HEK293 (cell line): ENCODE measurements at regions of chr14 and their contacts with region 1.

Region 1: DNA sequence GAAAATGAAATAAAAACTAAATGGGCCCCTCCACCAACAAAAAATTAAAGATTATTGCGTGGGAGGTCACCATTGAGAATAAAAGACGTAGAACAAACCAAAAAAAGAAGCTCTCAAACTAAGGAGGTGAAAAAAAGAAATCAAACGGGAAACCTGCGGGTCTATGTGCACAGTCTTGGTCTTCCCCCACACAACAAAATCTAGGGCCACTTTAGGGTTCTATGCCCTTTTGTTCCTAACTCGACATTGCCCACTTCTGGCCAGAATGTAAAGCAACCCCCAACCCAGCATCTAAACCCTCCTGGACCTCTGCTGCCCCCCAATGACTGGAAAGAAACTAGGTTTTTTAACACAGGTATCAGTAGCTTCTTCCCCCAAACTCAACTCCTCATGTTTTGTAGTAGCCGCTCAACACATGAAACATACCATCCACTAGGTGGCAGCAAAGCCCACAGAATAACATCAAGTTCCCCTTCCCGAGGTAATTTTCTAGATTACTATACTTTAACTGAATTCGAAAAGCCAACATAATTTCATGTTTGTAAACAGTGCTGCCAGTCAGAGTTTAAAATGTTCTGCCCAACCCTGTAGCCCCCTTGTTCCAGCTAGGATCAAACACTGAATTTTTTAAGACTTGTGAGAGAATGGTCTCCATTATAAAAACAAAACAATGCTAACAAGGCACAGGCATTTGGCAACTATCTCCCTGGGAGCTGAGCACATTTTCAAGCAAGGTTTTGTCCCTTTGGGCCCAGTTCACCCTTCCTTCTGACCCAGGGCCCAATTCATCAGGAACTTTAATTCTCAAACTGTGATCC is 18.7 kb downstream of the DAD1 start:
- H3K4me3 ChIP-seq: no peak overlapping the region
- H3K27ac ChIP-seq: no peak overlapping the region
- H3K4me1 ChIP-seq: peaks cover 2% of the 10 kb centered on the region; the same call in 1 of the 2 replicates
- CTCF ChIP-seq: peak; percentile 83

Region 2: DNA sequence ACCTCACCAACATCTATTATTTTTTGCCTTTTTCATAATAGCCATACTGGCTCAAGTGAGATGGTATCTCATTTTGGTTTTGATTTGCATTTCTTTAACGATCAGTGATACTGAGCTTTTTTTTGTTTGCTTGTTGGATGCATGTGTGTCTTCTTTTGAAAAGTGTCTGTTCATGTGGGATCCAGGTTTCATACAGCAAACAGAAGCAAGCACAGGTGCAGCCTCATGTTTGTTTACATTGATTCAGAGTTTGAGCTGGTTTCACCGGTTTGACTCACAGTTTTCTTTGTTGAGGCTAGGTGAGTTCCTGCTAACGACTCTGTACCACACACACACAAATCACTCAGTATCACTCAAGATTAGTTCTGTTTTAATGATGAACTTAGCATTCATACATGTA is 939.3 kb before region 1 on chr14:
- CTCF ChIA-PET with region 1: no interaction called
- POLR2A ChIA-PET with region 1: no interaction called
- H3K4me3 ChIP-seq: no peak overlapping the region
- H3K27ac ChIP-seq: no peak overlapping the region
- H3K4me1 ChIP-seq: no peaks in the 10 kb centered on the region
- CTCF ChIP-seq: no peak

Region 3: DNA sequence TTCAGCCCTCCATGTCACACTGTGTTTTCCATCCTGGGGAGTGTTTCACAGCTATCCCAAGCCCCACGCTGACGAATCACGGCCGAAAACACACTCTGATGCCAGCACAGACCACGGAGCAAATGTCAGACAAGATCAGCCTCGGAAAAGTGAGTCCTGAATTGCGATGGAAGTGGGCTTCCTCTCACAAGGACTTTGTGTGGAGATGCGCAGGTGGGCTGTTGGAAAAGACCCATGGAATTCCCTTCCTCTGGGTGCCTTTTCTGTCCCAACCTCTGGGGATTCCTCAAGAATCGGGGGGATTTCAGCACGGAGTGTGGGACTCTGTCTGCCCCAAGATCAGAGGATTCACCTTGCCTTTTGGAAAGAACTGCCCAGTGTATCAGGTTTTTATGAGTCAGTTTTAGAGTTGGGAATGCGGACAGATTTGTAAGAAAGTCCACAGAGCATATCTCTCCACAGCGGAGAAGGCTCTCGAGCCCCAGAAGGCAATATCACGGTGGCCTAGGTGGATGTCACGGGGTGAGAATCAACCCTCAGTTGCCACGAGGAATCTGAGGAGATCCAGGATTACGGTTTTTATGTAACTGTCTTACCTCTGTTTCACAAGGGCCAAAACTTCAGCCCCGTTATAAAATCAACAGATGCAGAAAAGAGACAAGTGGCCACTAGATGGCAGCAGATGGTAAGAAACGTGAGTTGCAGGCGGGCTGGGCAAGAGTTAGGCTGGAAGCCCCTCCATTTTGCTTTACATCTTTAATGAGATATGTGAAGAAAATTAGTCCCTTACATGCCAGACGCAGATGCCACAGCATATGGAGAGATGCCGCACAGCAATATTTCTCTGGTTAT is 183.2 kb before region 1 on chr14:
- CTCF ChIA-PET with region 1: interaction called, 12 read pairs
- POLR2A ChIA-PET with region 1: no interaction called
- H3K4me3 ChIP-seq: no peak overlapping the region
- H3K27ac ChIP-seq: no peak overlapping the region
- H3K4me1 ChIP-seq: no peaks in the 10 kb centered on the region
- CTCF ChIP-seq: peak; percentile 69

Region 4: DNA sequence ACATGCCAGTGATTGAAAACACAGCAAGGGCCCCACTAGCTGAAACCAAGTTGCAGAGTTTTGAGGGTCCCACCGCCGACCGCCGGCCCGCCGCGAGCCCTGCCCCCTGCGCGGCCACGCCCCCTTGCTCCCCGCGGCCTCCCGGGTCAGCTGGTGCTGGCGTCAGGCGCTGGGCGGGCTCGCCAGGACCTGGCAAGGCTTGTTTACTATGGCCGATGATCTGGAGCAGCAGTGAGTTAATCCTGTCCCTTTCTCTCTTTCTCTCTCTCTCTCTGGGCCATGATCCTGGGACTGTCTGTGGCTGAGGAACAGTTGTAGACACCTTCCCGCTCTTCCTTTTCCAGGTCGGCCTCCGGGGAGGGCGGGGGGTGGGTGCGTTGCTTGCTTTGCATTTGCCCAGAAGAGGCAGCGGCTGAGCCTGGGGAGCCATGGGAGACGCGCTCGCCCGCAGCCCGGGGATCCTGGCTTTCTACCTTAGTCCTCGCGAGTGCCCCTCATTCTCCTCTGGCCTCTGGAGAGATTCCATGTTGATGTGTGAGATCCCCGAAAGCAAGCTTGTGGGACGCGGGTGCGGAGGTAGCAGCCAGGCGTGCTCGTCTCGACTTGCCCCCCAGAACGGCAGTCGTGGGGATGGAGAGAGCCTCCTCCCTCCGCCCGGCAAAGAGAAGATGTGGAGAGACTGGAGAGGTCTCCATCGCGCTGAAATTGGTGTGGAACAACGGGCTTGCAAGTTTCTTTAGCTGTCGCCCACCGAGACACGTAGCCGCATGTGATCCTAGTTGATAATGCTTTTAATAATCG is 28.0 kb after region 1 on chr14 and contains the start of gene ABHD4:
- CTCF ChIA-PET with region 1: interaction called, 10 read pairs
- POLR2A ChIA-PET with region 1: no interaction called
- H3K4me3 ChIP-seq: peak within 1 kb of the TSS; percentile 86
- H3K27ac ChIP-seq: peak within 1 kb of the TSS; percentile 49; the same call in 1 of the 2 replicates
- H3K4me1 ChIP-seq: 0 out of 2 replicates have a peak, but pooled peaks cover 2% of the 10 kb centered on the region
- CTCF ChIP-seq: no peak; the same call in 1 of the 2 replicates

Region 5: DNA sequence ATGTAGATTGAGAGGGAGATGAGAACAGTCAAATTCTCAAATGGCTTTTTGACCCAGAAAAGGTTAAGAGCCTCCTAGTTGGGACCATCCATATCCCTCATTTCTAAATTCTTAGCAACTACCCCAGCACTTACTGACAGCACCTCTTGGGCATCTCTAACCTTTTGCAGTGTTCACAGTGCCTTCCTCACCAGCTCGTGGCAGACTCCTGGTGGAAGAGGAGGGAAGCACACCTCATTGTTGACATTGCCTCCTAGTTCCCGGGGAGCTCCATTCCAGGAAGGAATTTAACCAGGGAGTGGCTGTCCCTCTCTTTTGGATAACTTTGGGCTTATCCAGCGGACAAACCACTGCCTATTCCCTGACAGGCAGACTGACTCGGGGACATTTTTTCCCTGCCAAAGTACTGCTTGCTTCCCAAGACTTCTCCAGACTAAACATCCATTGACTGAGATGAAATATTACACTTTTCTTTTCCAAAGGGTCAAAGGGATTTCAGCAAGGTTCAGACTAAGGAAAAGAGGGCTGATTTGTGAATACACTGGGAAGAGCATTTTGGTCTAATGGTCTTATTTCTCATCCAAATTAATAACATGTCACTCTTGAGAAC is 82.8 kb after region 1 on chr14:
- CTCF ChIA-PET with region 1: interaction called, 91 read pairs
- POLR2A ChIA-PET with region 1: no interaction called
- H3K4me3 ChIP-seq: no peak overlapping the region
- H3K27ac ChIP-seq: no peak overlapping the region
- H3K4me1 ChIP-seq: peaks cover 5% of the 10 kb centered on the region; the same call in 1 of the 2 replicates
- CTCF ChIP-seq: peak; percentile 58

Region 6: DNA sequence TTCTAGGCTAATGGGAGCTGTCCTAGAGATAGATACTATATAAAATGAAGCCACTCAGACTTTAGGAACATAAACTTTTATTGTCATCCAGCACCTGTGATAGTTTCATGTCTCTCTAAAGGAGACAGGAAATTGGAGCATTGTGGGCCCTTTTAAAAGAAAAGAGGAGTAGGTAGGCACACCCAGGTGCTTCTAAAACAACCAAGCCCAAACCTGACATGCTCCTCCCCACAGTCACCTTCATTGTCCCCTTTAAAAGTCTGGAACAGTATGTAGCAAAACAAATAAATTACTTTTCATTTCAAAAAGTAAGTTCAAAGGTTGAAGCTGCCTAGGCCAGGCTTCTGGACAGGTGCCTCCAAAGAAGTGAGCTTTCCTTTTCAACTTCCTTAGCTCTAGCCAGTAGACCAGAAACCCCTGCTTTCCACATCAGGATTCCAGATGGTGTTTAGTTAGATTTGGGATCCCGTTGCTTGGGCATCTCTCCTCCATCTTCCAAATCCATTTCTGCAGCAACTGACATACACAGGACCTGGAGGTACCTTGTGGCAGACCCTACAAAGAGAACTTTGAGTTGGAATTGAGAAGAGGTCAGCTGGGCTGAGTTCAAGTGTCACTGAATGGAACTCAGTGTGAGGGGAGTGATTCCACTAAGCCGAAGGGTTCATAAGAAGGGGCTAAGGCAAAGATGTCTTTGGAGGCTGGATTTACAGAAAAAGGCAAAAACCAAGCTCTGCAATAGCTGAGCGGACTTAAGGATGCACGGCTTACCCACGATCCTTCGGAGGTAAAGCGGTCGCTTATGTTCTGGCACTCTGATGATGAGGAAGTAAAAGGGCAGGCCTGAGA is 203.0 kb after region 1 on chr14:
- CTCF ChIA-PET with region 1: interaction called, 10 read pairs
- POLR2A ChIA-PET with region 1: no interaction called
- H3K4me3 ChIP-seq: no peak overlapping the region
- H3K27ac ChIP-seq: no peak overlapping the region
- H3K4me1 ChIP-seq: no peaks in the 10 kb centered on the region; the same call in 1 of the 2 replicates
- CTCF ChIP-seq: no peak